Posterior vena cava (tissue), 2 donors: ENCODE measurements at regions of chr2 and their contacts with region 1.

Region 1: GRCh38 chr2:104853926-104854497 is at the start of gene POU3F3:
- DNase-seq: peak; percentile 86
- total RNA-seq, gene POU3F3: not detected

Region 2: DNA sequence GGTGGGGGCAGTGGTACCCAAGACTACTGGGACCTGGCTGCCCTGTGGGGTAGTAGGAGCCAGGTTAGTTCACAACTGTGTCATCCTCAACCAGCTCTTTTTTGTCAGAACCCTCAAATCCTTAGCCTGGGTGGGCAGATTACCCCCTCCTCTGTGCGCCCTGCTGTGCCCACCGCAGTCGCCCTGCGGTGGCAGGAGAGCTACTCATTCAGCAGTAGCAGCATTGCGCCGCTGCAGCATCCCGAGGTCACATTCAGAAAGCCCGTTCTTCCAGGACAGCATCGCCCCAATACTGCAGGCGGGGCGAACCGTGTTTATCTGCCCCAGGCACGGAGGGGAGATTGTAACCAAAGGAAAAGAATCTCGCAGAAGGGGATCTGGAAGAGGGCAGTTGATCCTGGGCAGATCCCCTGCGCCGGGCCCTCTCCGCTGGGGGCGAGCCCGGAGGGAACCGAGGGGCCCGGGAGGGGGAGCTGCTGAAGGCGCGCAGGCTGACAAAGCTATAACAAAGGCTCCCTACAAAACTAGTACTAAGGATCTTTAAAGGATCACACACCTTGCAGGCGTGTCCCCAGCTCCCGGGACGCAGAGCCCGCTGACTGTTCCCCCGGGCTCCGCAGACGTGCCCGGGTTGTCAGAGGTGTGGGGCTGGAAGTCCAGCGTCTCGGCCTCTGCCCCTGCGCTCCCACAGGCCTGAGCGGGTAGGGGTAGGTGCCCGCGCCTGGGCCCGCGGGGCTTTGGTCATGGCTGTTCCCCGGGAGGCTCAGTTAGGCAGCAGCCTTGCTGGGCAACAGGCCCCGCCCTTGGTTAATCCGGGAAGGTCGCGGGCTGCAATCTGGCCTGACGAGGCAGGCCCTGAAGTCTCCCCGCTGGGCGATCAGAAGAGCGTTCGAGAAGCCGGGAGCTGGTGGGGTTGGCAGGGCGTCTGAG is 13.1 kb after region 1 on chr2:
- intact Hi-C with region 1: loop called in 1 of 2 experiments (anchors 1 kb)
- DNase-seq: no peak